ENCODE measurements at regions of chr3 and their contacts with region 1.

Region 1: GRCh38 chr3:16177962-16178627 is 3.6 kb downstream of the GALNT15 start:
- DNase-seq: peak; percentile 94
- H3K4me3 ChIP-seq: peak overlapping the region; percentile 48 to 68 (median 52)
- H3K27ac ChIP-seq: peak overlapping the region; percentile 4 to 52 (median 28)
- H3K4me1 ChIP-seq: peaks cover 13 to 69% (median 43%) of the 10 kb centered on the region in 4 donors
- H3K27me3 ChIP-seq: no peaks in the 10 kb centered on the region
- CTCF ChIP-seq: peak; percentile 91 to 99 (median 94)
- EP300 ChIP-seq: no peak
- POLR2A ChIP-seq: no peak

Region 2: DNA sequence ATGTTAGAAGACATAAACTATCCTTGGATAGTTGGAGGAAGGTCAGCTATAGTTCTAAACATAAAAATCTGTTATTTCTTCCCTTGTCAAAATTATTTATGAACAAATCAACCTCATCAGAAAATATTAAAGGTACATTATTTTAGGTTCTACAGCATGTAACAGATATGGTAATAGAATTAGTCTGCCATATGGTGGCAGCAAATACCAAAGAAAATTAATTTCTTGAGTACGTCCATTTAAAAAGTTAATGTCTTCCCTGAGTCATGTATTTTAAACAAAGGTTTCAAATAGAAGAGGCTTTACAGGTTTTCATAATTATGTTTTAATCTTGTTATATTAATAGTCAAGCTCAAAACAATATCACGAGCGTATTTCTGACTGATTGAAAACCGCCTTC is 362.4 kb before region 1 on chr3:
- intact Hi-C with region 1: loop called (anchors 5 kb)
- DNase-seq: no peak
- H3K4me3 ChIP-seq: no peak overlapping the region
- H3K27ac ChIP-seq: no peak overlapping the region
- H3K4me1 ChIP-seq: peaks cover 8 to 23% (median 20%) of the 10 kb centered on the region in 4 donors
- H3K27me3 ChIP-seq: no peaks in the 10 kb centered on the region
- CTCF ChIP-seq: peak; percentile 50 to 65 (median 56)
- EP300 ChIP-seq: no peak
- POLR2A ChIP-seq: no peak

Region 3: GRCh38 chr3:16048435-16049318 is 129.4 kb before region 1 on chr3:
- intact Hi-C with region 1: loop called (anchors 2 kb)
- DNase-seq: no peak
- H3K4me3 ChIP-seq: peak overlapping the region in 1 of 4 donors; percentile 34
- H3K27ac ChIP-seq: no peak overlapping the region
- H3K4me1 ChIP-seq: peaks cover 5 to 15% (median 7%) of the 10 kb centered on the region in 4 donors
- H3K27me3 ChIP-seq: no peaks in the 10 kb centered on the region
- CTCF ChIP-seq: peak; percentile 72 to 83 (median 81)
- EP300 ChIP-seq: no peak
- POLR2A ChIP-seq: no peak

Measured in esophagus muscularis mucosa (tissue), 4 donors.